Ovary (tissue), 10 donors: ENCODE measurements at regions of chr18 and their contacts with region 1.

Region 1: DNA sequence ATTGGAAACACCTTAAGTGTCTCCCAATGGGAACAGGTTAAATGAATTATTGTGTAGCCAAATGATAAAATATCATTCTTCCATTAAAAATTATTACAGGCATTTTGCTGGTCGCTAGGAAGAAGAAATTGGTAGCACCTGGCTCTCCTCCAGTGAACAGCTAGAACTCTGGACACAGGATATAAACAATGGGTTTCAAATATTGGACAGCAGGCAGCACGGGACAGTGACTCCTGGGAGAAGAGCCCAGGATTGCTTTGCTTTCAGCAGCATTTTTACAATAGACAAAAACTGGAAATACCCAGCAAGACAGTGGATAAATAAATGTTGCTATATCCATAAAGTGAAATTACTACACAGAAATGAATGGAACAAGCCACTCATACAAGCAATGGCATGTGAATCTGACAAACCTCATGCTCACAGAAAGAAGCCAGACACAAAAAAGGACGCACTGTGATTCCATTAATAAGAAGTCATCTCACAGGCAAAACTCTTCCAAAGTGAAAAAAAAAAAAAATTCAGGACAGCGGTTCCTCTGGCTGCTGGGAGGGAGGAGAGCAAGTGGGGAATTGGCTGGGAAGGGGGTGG is 50.5 kb downstream of the LAMA1 start:
- DNase-seq: no peak
- H3K4me3 ChIP-seq: no peak overlapping the region
- H3K27ac ChIP-seq: no peak overlapping the region
- H3K4me1 ChIP-seq: no peaks in the 10 kb centered on the region
- H3K27me3 ChIP-seq: no peaks in the 10 kb centered on the region
- CTCF ChIP-seq: no peak
- EP300 ChIP-seq: no peak
- POLR2A ChIP-seq: no peak

Region 2: DNA sequence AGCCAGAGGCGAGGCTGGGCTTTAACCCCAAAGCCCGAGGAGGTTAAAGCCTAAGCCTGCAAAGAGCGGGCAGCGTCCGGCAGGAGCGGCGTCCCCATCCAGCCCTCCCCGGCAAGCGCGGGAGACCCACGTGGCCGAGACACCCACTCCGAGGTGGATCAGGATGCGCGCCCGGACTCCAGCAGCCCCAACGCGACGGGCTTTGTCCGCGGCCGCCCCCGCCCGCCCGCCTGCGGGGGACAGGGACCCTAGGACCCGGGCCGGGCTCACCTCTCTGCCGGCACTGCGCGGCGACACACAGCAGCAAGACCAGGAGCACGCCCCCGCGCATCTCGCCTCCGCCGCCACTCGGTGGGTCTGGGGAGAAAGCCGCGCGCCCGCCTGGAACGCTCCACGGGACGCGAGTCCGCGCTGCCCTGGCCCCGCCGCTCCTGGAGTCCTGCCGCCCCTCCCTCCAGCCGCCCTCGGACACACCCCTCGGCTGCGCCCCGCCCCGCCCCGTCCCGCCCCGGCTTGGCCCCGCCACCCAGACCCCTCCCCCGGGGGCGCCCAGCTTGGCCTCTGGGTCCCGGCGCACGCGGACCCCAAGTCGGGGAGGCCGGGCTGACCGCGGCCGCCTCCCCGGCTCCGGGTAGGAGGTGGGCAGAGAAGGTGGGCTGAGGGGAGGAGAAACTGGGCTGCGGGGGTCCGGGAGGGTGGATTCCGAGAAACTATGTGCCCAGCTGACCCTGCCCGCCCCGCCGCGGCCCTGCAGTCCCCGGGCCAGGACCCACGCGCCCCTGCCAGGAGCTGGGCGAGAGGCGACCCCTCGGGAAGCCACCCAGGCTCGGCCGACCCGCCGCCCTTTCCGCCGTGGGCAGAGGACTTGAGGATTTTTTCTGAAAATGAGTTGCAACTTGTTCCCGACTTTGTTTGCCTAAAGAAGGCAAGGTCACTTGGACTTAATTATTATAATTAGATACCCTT is 50.6 kb after region 1 on chr18 and contains the start of gene LAMA1:
- intact Hi-C with region 1: loop called in 1 of 4 experiments (anchors 10 kb)
- DNase-seq: peak; percentile 22 to 57 (median 42)
- H3K4me3 ChIP-seq: peak within 1 kb of the TSS; percentile 24
- H3K27ac ChIP-seq: no peak within 1 kb of the TSS
- H3K4me1 ChIP-seq: peaks cover 2% of the 10 kb centered on the region
- H3K27me3 ChIP-seq: no peaks in the 10 kb centered on the region
- CTCF ChIP-seq: no peak
- EP300 ChIP-seq: no peak
- POLR2A ChIP-seq: no peak
- total RNA-seq, gene LAMA1: 1.1 to 5.4 (median 3.3) TPM

Region 3: GRCh38 chr18:7329016-7329415 is 262.0 kb after region 1 on chr18:
- intact Hi-C with region 1: no loop called
- DNase-seq: no peak
- H3K4me3 ChIP-seq: no peak overlapping the region
- H3K27ac ChIP-seq: no peak overlapping the region
- H3K4me1 ChIP-seq: no peaks in the 10 kb centered on the region
- H3K27me3 ChIP-seq: no peaks in the 10 kb centered on the region
- CTCF ChIP-seq: no peak
- EP300 ChIP-seq: no peak
- POLR2A ChIP-seq: no peak

Region 4: GRCh38 chr18:7950380-7951143 is 883.5 kb after region 1 on chr18:
- intact Hi-C with region 1: loop called in 1 of 4 experiments (anchors 10 kb)
- DNase-seq: no peak
- H3K4me3 ChIP-seq: no peak overlapping the region
- H3K27ac ChIP-seq: no peak overlapping the region
- H3K4me1 ChIP-seq: peaks cover 2% of the 10 kb centered on the region
- H3K27me3 ChIP-seq: no peaks in the 10 kb centered on the region
- CTCF ChIP-seq: no peak
- EP300 ChIP-seq: no peak
- POLR2A ChIP-seq: no peak